ENCODE measurements at regions of chr1 and their contacts with region 1.

Region 1: GRCh38 chr1:27365372-27366112 is 1.2 kb downstream of the MAP3K6 start:
- DNase-seq: peak; percentile 37 to 84 (median 70)
- ATAC-seq: peak; percentile 70 to 76 (median 72)
- H3K4me3 ChIP-seq: peak overlapping the region; percentile 53 to 68
- H3K4me3 Mint-ChIP-seq: peak overlapping the region; percentile 85 to 87 (median 86)
- H3K27ac ChIP-seq: no peak overlapping the region
- H3K27ac Mint-ChIP-seq: peak overlapping the region; percentile 57 to 82
- H3K4me1 ChIP-seq: peaks cover 15 to 41% of the 10 kb centered on the region in 2 experiments
- H3K4me1 Mint-ChIP-seq: peaks cover 38 to 48% (median 43%) of the 10 kb centered on the region in 3 donors
- H3K27me3 ChIP-seq: peaks cover 0 to 11% of the 10 kb centered on the region in 2 experiments
- H3K27me3 Mint-ChIP-seq: no peaks in the 10 kb centered on the region

Region 2: GRCh38 chr1:25904943-25905679 is 1460.4 kb before region 1 on chr1:
- CTCF ChIA-PET with region 1: no interaction called
- POLR2A ChIA-PET with region 1: interaction called in 1 of 2 experiments, 11 read pairs
- DNase-seq: peak; percentile 72 to 91 (median 85)
- ATAC-seq: peak; percentile 72 to 75 (median 74)
- H3K4me3 ChIP-seq: peak overlapping the region; percentile 59 to 87
- H3K4me3 Mint-ChIP-seq: peak overlapping the region; percentile 86 to 91 (median 90)
- H3K27ac ChIP-seq: peak overlapping the region; percentile 49
- H3K27ac Mint-ChIP-seq: peak overlapping the region; percentile 75 to 81
- H3K4me1 ChIP-seq: peaks cover 14 to 15% of the 10 kb centered on the region in 2 experiments
- H3K4me1 Mint-ChIP-seq: peaks cover 24 to 26% (median 25%) of the 10 kb centered on the region in 3 donors
- H3K27me3 ChIP-seq: no peaks in the 10 kb centered on the region
- H3K27me3 Mint-ChIP-seq: no peaks in the 10 kb centered on the region

Region 3: GRCh38 chr1:27218736-27219135 is 146.8 kb before region 1 on chr1:
- CTCF ChIA-PET with region 1: interaction called in 1 of 2 experiments, 10 read pairs
- POLR2A ChIA-PET with region 1: no interaction called
- DNase-seq: no peak
- ATAC-seq: no peak
- H3K4me3 ChIP-seq: no peak overlapping the region
- H3K4me3 Mint-ChIP-seq: no peak overlapping the region
- H3K27ac ChIP-seq: no peak overlapping the region
- H3K27ac Mint-ChIP-seq: no peak overlapping the region
- H3K4me1 ChIP-seq: no peaks in the 10 kb centered on the region
- H3K4me1 Mint-ChIP-seq: peaks cover 0 to 6% (median 4%) of the 10 kb centered on the region in 3 donors
- H3K27me3 ChIP-seq: no peaks in the 10 kb centered on the region
- H3K27me3 Mint-ChIP-seq: no peaks in the 10 kb centered on the region

Region 4: DNA sequence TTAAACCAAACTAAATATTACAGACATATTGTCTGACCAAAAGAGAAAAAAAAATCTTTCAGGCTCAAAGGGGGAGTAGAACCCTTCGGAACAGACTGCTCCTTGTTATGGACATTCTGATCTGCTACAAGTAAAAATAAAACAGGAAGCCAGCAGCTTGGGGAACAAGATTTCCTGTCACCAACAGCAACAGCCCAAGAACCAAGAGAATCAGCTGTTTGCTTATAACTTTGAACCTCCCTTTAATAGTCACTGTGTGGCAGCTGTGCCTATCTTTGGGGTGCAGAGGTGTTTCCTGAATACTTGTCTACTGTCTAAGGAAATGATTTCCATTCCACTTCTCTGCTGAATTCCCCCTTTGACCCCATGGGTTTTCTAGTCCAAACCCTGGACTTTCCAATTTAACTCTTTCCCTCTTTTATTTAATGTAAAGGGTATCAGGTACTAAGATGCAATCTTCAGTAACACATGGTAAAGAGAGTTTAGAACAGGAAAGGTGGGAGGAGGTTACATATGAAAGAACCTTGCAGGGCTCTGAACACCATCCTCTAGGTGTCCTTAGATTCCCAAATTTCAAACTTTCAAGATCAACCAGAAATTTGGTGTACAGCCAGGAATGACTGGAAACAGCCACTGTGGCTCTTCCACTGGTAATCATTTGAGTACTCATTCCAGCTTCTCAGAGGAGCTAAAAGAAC is 65.5 kb after region 1 on chr1:
- CTCF ChIA-PET with region 1: no interaction called
- POLR2A ChIA-PET with region 1: no interaction called
- DNase-seq: peak in 27 of 35 experiments; percentile 5 to 66 (median 17)
- ATAC-seq: peak; percentile 83 to 92 (median 88)
- H3K4me3 ChIP-seq: peak overlapping the region in 1 of 2 donors; percentile 40
- H3K4me3 Mint-ChIP-seq: peak overlapping the region; percentile 31 to 74 (median 64)
- H3K27ac ChIP-seq: peak overlapping the region; percentile 45
- H3K27ac Mint-ChIP-seq: peak overlapping the region; percentile 88 to 91
- H3K4me1 ChIP-seq: peaks cover 60 to 80% of the 10 kb centered on the region in 2 experiments
- H3K4me1 Mint-ChIP-seq: peaks cover 85 to 88% (median 85%) of the 10 kb centered on the region in 3 donors
- H3K27me3 ChIP-seq: no peaks in the 10 kb centered on the region
- H3K27me3 Mint-ChIP-seq: no peaks in the 10 kb centered on the region

Region 5: GRCh38 chr1:27891196-27891889 is 525.8 kb after region 1 on chr1:
- CTCF ChIA-PET with region 1: no interaction called
- POLR2A ChIA-PET with region 1: no interaction called
- DNase-seq: peak in 16 of 35 experiments; percentile 24 to 69 (median 42)
- ATAC-seq: peak in 1 of 4 experiments; percentile 57
- H3K4me3 ChIP-seq: no peak overlapping the region
- H3K4me3 Mint-ChIP-seq: peak overlapping the region in 2 of 3 donors; percentile 47 to 51
- H3K27ac ChIP-seq: peak overlapping the region; percentile 81
- H3K27ac Mint-ChIP-seq: peak overlapping the region; percentile 67 to 96
- H3K4me1 ChIP-seq: peaks cover 38 to 58% of the 10 kb centered on the region in 2 experiments
- H3K4me1 Mint-ChIP-seq: peaks cover 24 to 72% (median 68%) of the 10 kb centered on the region in 3 donors
- H3K27me3 ChIP-seq: no peaks in the 10 kb centered on the region
- H3K27me3 Mint-ChIP-seq: no peaks in the 10 kb centered on the region

Measured in T-cell (primary cell).